A673 (cell line): ENCODE measurements at regions of chr22 and their contacts with region 1.

Region 1: GRCh38 chr22:31451709-31452571 is 37.7 kb downstream of the EIF4ENIF1 start:
- DNase-seq: peak; percentile 49
- H3K4me3 ChIP-seq: no peak overlapping the region
- H3K27ac ChIP-seq: no peak overlapping the region
- H3K4me1 ChIP-seq: no peaks in the 10 kb centered on the region
- H3K27me3 ChIP-seq: no peaks in the 10 kb centered on the region
- CTCF ChIP-seq: peak; percentile 66

Region 2: DNA sequence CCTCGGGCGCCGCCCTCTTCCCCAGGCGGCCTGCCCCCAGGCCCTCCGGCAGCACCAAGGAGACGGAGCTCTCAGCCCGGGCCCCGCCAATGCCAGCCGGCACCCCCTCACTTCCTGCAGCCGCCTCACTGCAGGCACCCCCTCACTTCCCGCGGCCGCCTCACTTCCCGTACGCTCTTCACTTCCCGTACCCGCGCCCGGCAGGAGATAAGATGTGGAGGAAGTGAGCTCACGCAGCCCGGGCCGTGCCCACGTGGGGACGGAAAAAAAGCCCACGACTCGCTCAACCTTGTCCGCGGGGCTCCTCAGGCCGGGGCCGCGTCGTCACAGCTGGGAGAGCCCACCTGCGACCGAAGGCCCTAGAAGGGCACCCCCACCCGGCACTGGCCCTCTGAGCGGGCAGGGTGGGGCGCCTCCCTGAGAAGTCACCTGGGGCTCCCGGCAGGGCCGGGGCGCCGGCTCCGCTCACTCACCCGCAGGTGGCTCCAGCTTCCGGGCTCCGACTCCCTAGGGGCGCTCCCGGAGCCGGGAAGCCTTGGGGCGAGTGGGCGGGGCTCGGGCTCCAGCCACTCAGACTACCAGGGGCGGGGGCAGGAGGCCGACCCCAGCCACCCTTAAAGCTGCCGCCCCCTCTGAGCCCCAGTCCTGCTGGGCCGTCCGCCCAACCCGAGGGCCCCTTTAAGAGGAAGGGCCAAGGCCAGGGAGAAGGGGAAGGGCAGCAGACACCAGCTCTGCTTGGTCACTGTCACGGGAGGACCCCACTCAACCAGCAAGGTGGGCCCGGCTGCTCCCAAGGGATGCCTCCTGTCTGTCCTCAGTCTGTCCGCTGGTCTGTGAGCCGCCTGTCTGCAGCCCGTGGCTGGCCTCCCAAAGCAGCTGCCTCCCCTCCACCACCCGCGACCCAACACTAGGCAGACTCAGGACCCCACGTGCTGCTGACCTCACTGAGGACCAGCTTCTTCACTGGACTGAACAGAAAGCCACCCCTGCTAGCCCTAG is 178.7 kb after region 1 on chr22:
- CTCF ChIA-PET with region 1: no interaction called
- POLR2A ChIA-PET with region 1: no interaction called
- intact Hi-C with region 1: loop called (anchors 10 kb)
- DNase-seq: peak; percentile 86
- H3K4me3 ChIP-seq: peak overlapping the region; percentile 75
- H3K27ac ChIP-seq: peak overlapping the region; percentile 92
- H3K4me1 ChIP-seq: peaks cover 5% of the 10 kb centered on the region
- H3K27me3 ChIP-seq: no peaks in the 10 kb centered on the region
- CTCF ChIP-seq: no peak